ENCODE measurements at regions of chr5 and their contacts with region 1.

Region 1: GRCh38 chr5:109439590-109439989 is 29.8 kb upstream of the PJA2 start:
- DNase-seq: no peak
- ATAC-seq: no peak
- H3K4me3 ChIP-seq: no peak overlapping the region
- H3K4me3 Mint-ChIP-seq: no peak overlapping the region
- H3K27ac ChIP-seq: no peak overlapping the region
- H3K27ac Mint-ChIP-seq: no peak overlapping the region
- H3K4me1 ChIP-seq: no peaks in the 10 kb centered on the region
- H3K4me1 Mint-ChIP-seq: no peaks in the 10 kb centered on the region
- H3K27me3 ChIP-seq: no peaks in the 10 kb centered on the region
- H3K27me3 Mint-ChIP-seq: peaks cover 0 to 9% (median 0%) of the 10 kb centered on the region in 5 donors

Region 2: DNA sequence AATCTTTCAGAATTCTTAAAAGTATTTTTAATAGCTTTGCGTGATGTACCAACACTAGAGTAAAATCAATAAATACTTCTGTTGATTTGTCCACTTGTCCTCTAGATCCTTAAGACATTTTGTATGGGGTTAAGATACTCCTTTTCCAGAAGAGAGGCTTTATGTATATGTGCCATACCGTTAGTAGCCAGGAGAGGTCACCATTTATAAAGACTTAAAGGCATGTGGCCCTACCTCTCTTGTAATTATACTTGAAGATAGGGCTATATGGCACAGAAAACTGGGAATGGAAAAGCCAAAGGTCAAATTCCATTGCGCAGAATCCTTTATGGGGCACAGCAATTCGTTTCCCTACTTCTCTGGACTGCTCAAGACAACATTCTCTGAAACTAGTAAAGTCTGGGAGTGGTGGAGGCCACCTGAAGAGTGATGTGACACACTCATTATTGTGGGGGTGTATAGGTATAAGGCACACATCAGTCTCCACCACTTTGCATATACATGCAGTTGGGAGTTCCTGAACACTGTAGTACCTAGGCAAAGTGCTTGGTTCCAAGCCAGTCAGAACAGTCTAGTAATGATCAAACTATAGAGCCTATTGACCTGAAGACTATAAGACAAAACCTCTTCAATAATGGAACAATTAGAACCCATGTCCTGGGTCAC is 917.6 kb before region 1 on chr5:
- CTCF ChIA-PET with region 1: no interaction called
- POLR2A ChIA-PET with region 1: no interaction called
- intact Hi-C with region 1: loop called in 1 of 2 experiments (anchors 5 kb)
- DNase-seq: peak in 5 of 9 donors; percentile 4 to 29 (median 16)
- ATAC-seq: peak; percentile 73
- H3K4me3 ChIP-seq: no peak overlapping the region
- H3K4me3 Mint-ChIP-seq: no peak overlapping the region
- H3K27ac ChIP-seq: no peak overlapping the region
- H3K27ac Mint-ChIP-seq: no peak overlapping the region
- H3K4me1 ChIP-seq: no peaks in the 10 kb centered on the region
- H3K4me1 Mint-ChIP-seq: peaks cover 0 to 3% (median 0%) of the 10 kb centered on the region in 7 donors
- H3K27me3 ChIP-seq: no peaks in the 10 kb centered on the region
- H3K27me3 Mint-ChIP-seq: peaks cover 0 to 21% (median 13%) of the 10 kb centered on the region in 5 donors

Region 3: DNA sequence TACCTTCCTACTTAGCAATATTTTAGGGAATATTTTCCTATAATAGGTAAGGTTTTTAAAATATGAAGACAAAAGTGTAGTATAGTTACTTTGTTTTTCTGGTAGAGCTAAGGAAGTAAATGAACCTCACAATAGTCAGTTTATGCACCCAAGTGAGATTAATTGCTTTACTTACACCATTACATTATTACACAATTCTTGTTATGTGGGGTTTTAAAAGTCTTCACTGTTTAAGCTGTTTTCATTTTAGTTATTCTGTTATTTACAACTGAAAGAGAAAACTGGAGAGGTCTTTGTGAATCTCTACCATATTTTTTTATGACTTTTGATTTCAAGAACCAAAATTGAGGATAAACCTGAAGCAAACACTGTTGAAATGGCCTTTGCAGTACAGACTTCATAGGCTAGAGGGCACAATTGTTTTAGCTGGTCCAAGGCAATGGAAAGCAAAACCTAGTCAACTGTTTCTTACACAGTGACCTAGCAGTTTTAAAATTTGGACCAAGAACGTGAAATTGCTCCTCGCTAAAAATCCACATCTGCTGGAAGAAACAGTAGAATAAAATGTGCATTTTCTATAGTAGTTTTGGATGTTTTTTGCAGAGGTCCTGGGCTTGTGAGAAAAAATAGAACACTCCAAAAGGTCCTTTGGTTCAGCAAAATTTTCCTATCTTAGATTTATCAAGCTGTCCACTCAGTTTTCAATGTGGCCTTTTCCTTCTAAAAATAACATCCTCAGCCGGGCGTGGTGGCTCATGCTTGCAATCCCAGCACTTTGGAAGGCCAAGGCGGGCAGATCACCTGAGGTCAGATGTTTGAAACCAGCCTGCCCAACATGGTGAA is 758.3 kb before region 1 on chr5:
- CTCF ChIA-PET with region 1: no interaction called
- POLR2A ChIA-PET with region 1: no interaction called
- intact Hi-C with region 1: loop called (anchors 1 to 2 kb)
- DNase-seq: peak in 6 of 9 donors; percentile 23 to 58 (median 44)
- ATAC-seq: peak; percentile 88
- H3K4me3 ChIP-seq: no peak overlapping the region
- H3K4me3 Mint-ChIP-seq: no peak overlapping the region
- H3K27ac ChIP-seq: no peak overlapping the region
- H3K27ac Mint-ChIP-seq: no peak overlapping the region
- H3K4me1 ChIP-seq: no peaks in the 10 kb centered on the region
- H3K4me1 Mint-ChIP-seq: no peaks in the 10 kb centered on the region
- H3K27me3 ChIP-seq: no peaks in the 10 kb centered on the region
- H3K27me3 Mint-ChIP-seq: peaks cover 0 to 9% (median 0%) of the 10 kb centered on the region in 5 donors

Region 4: GRCh38 chr5:109105631-109106267 is 333.8 kb before region 1 on chr5:
- CTCF ChIA-PET with region 1: no interaction called
- POLR2A ChIA-PET with region 1: no interaction called
- intact Hi-C with region 1: loop called in 1 of 2 experiments (anchors 10 kb)
- DNase-seq: no peak
- ATAC-seq: no peak
- H3K4me3 ChIP-seq: no peak overlapping the region
- H3K4me3 Mint-ChIP-seq: no peak overlapping the region
- H3K27ac ChIP-seq: no peak overlapping the region
- H3K27ac Mint-ChIP-seq: no peak overlapping the region
- H3K4me1 ChIP-seq: no peaks in the 10 kb centered on the region
- H3K4me1 Mint-ChIP-seq: no peaks in the 10 kb centered on the region
- H3K27me3 ChIP-seq: no peaks in the 10 kb centered on the region
- H3K27me3 Mint-ChIP-seq: no peaks in the 10 kb centered on the region

Region 5: DNA sequence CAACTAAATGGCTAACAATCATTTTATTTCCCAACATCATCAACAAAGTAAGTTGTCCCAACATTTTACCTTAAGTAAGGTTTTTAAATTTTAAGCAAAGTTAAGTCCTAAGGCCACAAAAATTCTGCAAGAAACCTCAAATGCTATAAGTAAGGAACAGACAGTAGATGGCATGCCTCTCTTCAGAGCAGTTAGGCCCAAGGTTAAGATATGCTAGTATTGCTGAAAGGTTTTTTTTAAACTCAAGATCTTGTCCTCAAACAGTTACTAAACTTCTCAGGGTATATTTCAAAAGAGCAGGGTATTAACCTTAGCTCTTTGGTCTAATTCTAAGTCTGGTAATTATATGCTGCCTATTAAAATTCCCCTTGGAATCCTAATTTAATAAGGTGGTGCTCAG is 65.0 kb before region 1 on chr5:
- CTCF ChIA-PET with region 1: interaction called, 3 read pairs
- POLR2A ChIA-PET with region 1: no interaction called
- intact Hi-C with region 1: loop called in 1 of 2 experiments (anchors 1 kb)
- DNase-seq: peak in 3 of 9 donors; percentile 5 to 13 (median 9)
- ATAC-seq: no peak
- H3K4me3 ChIP-seq: no peak overlapping the region
- H3K4me3 Mint-ChIP-seq: no peak overlapping the region
- H3K27ac ChIP-seq: no peak overlapping the region
- H3K27ac Mint-ChIP-seq: peak overlapping the region in 3 of 9 donors; percentile 45 to 58 (median 45)
- H3K4me1 ChIP-seq: peaks cover 0 to 3% of the 10 kb centered on the region in 2 donors
- H3K4me1 Mint-ChIP-seq: peaks cover 20 to 82% (median 71%) of the 10 kb centered on the region in 7 donors
- H3K27me3 ChIP-seq: no peaks in the 10 kb centered on the region
- H3K27me3 Mint-ChIP-seq: no peaks in the 10 kb centered on the region